Thyroid gland (tissue), 4 donors: ENCODE measurements at regions of chr2 and their contacts with region 1.

Region 1: GRCh38 chr2:54106631-54107454 is 8.6 kb upstream of the ACYP2 start:
- DNase-seq: peak; percentile 40 to 53
- H3K4me3 ChIP-seq: no peak overlapping the region
- H3K27ac ChIP-seq: no peak overlapping the region
- H3K4me1 ChIP-seq: peaks cover 0 to 15% of the 10 kb centered on the region in 2 donors
- H3K27me3 ChIP-seq: no peaks in the 10 kb centered on the region
- CTCF ChIP-seq: peak in 5 of 6 experiments; percentile 19 to 76 (median 65)
- POLR2A ChIP-seq: no peak

Region 2: DNA sequence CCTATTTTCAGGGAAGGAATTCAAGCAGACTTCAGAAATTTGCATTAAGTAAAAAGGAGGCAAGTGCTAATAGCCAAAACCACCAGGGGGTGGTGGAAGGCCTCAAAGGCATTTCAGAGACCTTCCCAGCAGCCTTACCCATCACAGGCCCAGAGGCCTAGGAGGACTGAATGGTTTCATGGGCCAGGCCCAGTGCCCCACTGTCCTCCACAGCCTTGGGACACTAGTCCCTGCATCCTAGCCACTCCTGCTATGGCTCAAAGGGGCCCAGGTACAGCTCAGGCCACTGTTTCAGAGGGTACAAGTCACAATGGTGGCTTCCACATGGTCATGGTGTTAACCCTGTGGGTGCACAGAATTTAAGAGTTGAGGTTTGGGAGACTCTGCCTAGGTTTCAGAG is 397.9 kb before region 1 on chr2:
- intact Hi-C with region 1: no loop called
- DNase-seq: no peak
- H3K4me3 ChIP-seq: no peak overlapping the region
- H3K27ac ChIP-seq: no peak overlapping the region
- H3K4me1 ChIP-seq: peaks cover 11 to 15% of the 10 kb centered on the region in 2 donors
- H3K27me3 ChIP-seq: no peaks in the 10 kb centered on the region
- CTCF ChIP-seq: no peak
- POLR2A ChIP-seq: no peak

Region 3: GRCh38 chr2:54052825-54053718 is 53.8 kb before region 1 on chr2:
- intact Hi-C with region 1: no loop called
- DNase-seq: no peak
- H3K4me3 ChIP-seq: no peak overlapping the region
- H3K27ac ChIP-seq: peak overlapping the region in 2 of 3 donors; percentile 6 to 60
- H3K4me1 ChIP-seq: peaks cover 12 to 13% of the 10 kb centered on the region in 2 donors
- H3K27me3 ChIP-seq: no peaks in the 10 kb centered on the region
- CTCF ChIP-seq: no peak
- POLR2A ChIP-seq: no peak

Region 4: GRCh38 chr2:54259413-54260240 is 152.8 kb after region 1 on chr2:
- intact Hi-C with region 1: no loop called
- DNase-seq: no peak
- H3K4me3 ChIP-seq: no peak overlapping the region
- H3K27ac ChIP-seq: no peak overlapping the region
- H3K4me1 ChIP-seq: peaks cover 0 to 7% of the 10 kb centered on the region in 2 donors
- H3K27me3 ChIP-seq: no peaks in the 10 kb centered on the region
- CTCF ChIP-seq: no peak
- POLR2A ChIP-seq: no peak

Region 5: GRCh38 chr2:54838585-54839035 is 731.8 kb after region 1 on chr2:
- intact Hi-C with region 1: loop called (anchors 5 kb)
- DNase-seq: peak; percentile 64 to 73
- H3K4me3 ChIP-seq: no peak overlapping the region
- H3K27ac ChIP-seq: peak overlapping the region; percentile 56 to 91 (median 81)
- H3K4me1 ChIP-seq: peaks cover 11 to 17% of the 10 kb centered on the region in 2 donors
- H3K27me3 ChIP-seq: no peaks in the 10 kb centered on the region
- CTCF ChIP-seq: peak; percentile 66 to 82 (median 78)
- POLR2A ChIP-seq: no peak